T-cell (primary cell): ENCODE measurements at regions of chr6 and their contacts with region 1.

Region 1: GRCh38 chr6:27146706-27147505 is 100.6 kb upstream of the PRSS16 start:
- DNase-seq: peak; percentile 43 to 96 (median 69)
- ATAC-seq: peak; percentile 85 to 88 (median 86)
- H3K4me3 ChIP-seq: peak overlapping the region; percentile 77 to 93
- H3K4me3 Mint-ChIP-seq: no peak overlapping the region
- H3K27ac ChIP-seq: peak overlapping the region; percentile 91
- H3K27ac Mint-ChIP-seq: no peak overlapping the region
- H3K4me1 ChIP-seq: peaks cover 11 to 29% of the 10 kb centered on the region in 2 experiments
- H3K4me1 Mint-ChIP-seq: peaks cover 13 to 20% (median 18%) of the 10 kb centered on the region in 3 donors
- H3K27me3 ChIP-seq: no peaks in the 10 kb centered on the region
- H3K27me3 Mint-ChIP-seq: no peaks in the 10 kb centered on the region

Region 2: DNA sequence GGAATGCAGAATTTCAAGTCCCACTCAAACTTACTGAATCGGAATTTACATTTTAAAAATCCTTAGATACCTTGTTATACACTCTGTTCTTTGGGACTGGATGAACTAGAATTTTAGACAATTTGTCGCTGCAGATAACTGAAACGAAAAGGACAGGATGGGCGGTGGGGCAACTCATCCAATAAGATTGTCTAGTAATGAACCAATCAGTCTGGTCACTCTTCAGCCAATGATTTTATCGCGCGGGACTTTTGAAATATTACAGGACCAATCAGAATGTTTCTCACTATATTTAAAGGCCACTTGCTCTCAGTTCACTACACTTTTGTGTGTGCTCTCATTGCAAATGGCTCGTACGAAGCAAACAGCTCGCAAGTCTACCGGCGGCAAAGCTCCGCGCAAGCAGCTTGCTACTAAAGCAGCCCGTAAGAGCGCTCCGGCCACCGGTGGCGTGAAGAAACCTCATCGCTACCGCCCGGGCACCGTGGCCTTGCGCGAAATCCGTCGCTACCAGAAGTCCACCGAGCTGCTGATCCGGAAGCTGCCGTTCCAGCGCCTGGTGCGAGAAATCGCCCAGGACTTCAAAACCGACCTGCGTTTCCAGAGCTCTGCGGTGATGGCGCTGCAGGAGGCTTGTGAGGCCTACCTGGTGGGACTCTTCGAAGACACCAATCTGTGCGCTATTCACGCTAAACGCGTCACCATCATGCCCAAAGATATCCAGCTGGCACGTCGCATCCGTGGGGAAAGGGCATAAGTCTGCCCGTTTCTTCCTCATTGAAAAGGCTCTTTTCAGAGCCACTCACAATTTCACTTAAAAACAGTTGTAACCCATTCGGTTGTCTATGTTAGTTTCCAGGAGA is 1101.6 kb before region 1 on chr6:
- CTCF ChIA-PET with region 1: no interaction called
- POLR2A ChIA-PET with region 1: interaction called in 1 of 2 experiments, 22 read pairs
- DNase-seq: peak; percentile 45 to 90 (median 78)
- ATAC-seq: peak; percentile 63 to 66 (median 64)
- H3K4me3 ChIP-seq: peak overlapping the region; percentile 77 to 83
- H3K4me3 Mint-ChIP-seq: peak overlapping the region; percentile 84 to 91 (median 90)
- H3K27ac ChIP-seq: peak overlapping the region; percentile 90
- H3K27ac Mint-ChIP-seq: peak overlapping the region; percentile 98
- H3K4me1 ChIP-seq: peaks cover 5 to 26% of the 10 kb centered on the region in 2 experiments
- H3K4me1 Mint-ChIP-seq: peaks cover 15 to 27% (median 26%) of the 10 kb centered on the region in 3 donors
- H3K27me3 ChIP-seq: no peaks in the 10 kb centered on the region
- H3K27me3 Mint-ChIP-seq: no peaks in the 10 kb centered on the region

Region 3: DNA sequence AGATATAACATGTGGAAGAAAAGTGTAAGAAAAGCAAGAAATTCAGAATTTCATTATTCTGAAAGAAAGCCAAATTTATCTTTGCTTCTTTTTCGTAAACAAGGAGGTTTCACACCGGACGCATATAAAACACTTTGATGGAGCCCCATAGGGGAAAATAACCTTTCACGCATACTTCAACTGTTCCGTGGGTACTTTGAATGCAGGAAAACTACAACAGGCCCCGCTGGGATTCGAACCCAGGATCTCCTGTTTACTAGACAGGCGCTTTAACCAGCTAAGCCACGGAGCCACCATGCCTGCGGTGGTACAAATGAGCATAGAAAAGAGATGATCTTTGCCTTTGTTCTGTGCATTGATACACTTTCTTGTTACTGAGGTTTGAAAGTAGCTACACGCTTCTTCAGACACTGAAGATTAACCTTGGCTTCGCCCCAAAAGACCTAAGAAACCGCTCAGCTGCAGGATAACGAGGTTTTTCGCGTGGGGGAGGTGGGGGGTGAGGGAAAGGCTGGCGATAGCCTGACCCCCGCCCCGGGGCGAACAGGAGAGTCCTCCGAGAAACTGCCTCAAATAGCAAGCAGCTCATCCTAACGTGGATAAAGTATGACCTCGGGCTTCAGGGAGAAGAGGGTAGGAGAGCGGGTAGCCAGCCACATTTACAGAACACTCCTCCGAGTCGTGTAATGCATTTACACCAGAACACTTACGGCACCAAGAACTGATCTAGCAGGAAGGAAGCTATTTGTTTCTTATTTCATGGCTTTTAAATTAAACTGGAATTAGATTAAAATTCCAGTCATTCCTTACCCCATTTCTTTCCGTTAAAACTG is 614.0 kb before region 1 on chr6:
- CTCF ChIA-PET with region 1: interaction called in 1 of 2 experiments, 6 read pairs
- POLR2A ChIA-PET with region 1: interaction called in 1 of 2 experiments, 14 read pairs
- DNase-seq: peak; percentile 70 to 95 (median 86)
- ATAC-seq: peak; percentile 38 to 48 (median 43)
- H3K4me3 ChIP-seq: peak overlapping the region; percentile 66 to 86
- H3K4me3 Mint-ChIP-seq: peak overlapping the region; percentile 92 to 97 (median 95)
- H3K27ac ChIP-seq: peak overlapping the region; percentile 60
- H3K27ac Mint-ChIP-seq: peak overlapping the region; percentile 97 to 98
- H3K4me1 ChIP-seq: peaks cover 20 to 32% of the 10 kb centered on the region in 2 experiments
- H3K4me1 Mint-ChIP-seq: peaks cover 53 to 66% (median 60%) of the 10 kb centered on the region in 3 donors
- H3K27me3 ChIP-seq: no peaks in the 10 kb centered on the region
- H3K27me3 Mint-ChIP-seq: peaks cover 0 to 5% of the 10 kb centered on the region in 2 donors

Region 4: GRCh38 chr6:27132532-27133280 is 14.2 kb before region 1 on chr6:
- CTCF ChIA-PET with region 1: interaction called, 3 to 52 read pairs
- POLR2A ChIA-PET with region 1: interaction called, 88 to 201 read pairs
- DNase-seq: peak; percentile 76 to 98 (median 87)
- ATAC-seq: peak; percentile 80 to 87 (median 86)
- H3K4me3 ChIP-seq: peak overlapping the region; percentile 49 to 77
- H3K4me3 Mint-ChIP-seq: no peak overlapping the region
- H3K27ac ChIP-seq: peak overlapping the region; percentile 85
- H3K27ac Mint-ChIP-seq: no peak overlapping the region
- H3K4me1 ChIP-seq: peaks cover 17 to 34% of the 10 kb centered on the region in 2 experiments
- H3K4me1 Mint-ChIP-seq: peaks cover 22 to 30% (median 22%) of the 10 kb centered on the region in 3 donors
- H3K27me3 ChIP-seq: no peaks in the 10 kb centered on the region
- H3K27me3 Mint-ChIP-seq: no peaks in the 10 kb centered on the region

Region 5: GRCh38 chr6:27280064-27280539 is 133.2 kb after region 1 on chr6:
- CTCF ChIA-PET with region 1: no interaction called
- POLR2A ChIA-PET with region 1: no interaction called
- DNase-seq: peak in 1 of 35 experiments; percentile 30
- ATAC-seq: no peak
- H3K4me3 ChIP-seq: no peak overlapping the region
- H3K4me3 Mint-ChIP-seq: no peak overlapping the region
- H3K27ac ChIP-seq: no peak overlapping the region
- H3K27ac Mint-ChIP-seq: peak overlapping the region in 1 of 2 donors; percentile 71
- H3K4me1 ChIP-seq: peaks cover 0 to 9% of the 10 kb centered on the region in 2 experiments
- H3K4me1 Mint-ChIP-seq: peaks cover 0 to 7% (median 5%) of the 10 kb centered on the region in 3 donors
- H3K27me3 ChIP-seq: peaks cover 50 to 68% of the 10 kb centered on the region in 2 experiments
- H3K27me3 Mint-ChIP-seq: peaks cover 76 to 87% of the 10 kb centered on the region in 2 donors

Region 6: GRCh38 chr6:27503436-27504030 is 356.6 kb after region 1 on chr6:
- CTCF ChIA-PET with region 1: no interaction called
- POLR2A ChIA-PET with region 1: interaction called in 1 of 2 experiments, 12 read pairs
- DNase-seq: peak; percentile 55 to 86 (median 74)
- ATAC-seq: peak; percentile 58 to 66 (median 65)
- H3K4me3 ChIP-seq: peak overlapping the region; percentile 62 to 84
- H3K4me3 Mint-ChIP-seq: peak overlapping the region; percentile 79 to 86 (median 83)
- H3K27ac ChIP-seq: peak overlapping the region; percentile 64
- H3K27ac Mint-ChIP-seq: peak overlapping the region; percentile 80 to 81
- H3K4me1 ChIP-seq: peaks cover 10 to 15% of the 10 kb centered on the region in 2 experiments
- H3K4me1 Mint-ChIP-seq: peaks cover 37 to 42% (median 39%) of the 10 kb centered on the region in 3 donors
- H3K27me3 ChIP-seq: peaks cover 7 to 8% of the 10 kb centered on the region in 2 experiments
- H3K27me3 Mint-ChIP-seq: peaks cover 0 to 10% of the 10 kb centered on the region in 2 donors

Region 7: DNA sequence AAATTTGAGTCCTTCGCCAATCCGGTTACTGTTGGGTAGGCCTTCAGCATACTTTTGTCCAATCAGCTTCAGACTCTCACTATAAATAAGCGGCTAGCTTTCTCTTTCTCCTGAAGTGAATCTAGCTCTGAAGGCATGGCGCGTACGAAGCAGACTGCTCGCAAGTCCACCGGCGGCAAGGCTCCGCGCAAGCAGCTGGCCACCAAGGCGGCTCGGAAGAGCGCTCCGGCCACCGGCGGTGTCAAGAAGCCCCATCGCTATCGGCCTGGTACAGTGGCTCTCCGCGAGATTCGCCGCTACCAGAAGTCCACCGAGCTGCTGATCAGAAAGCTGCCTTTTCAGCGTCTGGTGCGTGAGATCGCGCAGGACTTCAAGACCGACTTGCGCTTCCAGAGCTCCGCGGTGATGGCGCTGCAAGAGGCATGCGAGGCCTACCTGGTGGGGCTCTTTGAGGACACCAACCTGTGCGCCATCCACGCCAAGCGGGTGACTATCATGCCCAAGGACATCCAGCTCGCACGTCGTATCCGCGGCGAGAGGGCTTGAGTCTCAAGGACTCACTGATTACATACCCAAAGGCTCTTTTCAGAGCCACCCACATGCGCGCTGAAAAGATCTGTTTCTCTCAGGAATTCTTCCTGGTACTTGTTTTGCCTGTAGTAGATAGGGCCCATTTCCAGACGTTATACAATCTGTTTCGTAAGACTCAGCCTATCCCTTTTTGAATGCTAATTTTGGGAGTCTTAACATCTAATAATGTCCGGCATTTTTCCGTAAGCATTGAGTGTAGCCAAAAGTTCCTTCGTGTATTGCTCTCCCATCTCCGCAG is 663.2 kb after region 1 on chr6:
- CTCF ChIA-PET with region 1: interaction called in 1 of 2 experiments, 4 read pairs
- POLR2A ChIA-PET with region 1: interaction called, 4 to 41 read pairs
- DNase-seq: peak; percentile 60 to 94 (median 73)
- ATAC-seq: peak; percentile 61 to 66 (median 62)
- H3K4me3 ChIP-seq: peak overlapping the region; percentile 62 to 68
- H3K4me3 Mint-ChIP-seq: peak overlapping the region; percentile 87 to 94 (median 90)
- H3K27ac ChIP-seq: peak overlapping the region; percentile 81
- H3K27ac Mint-ChIP-seq: peak overlapping the region; percentile 95 to 98
- H3K4me1 ChIP-seq: peaks cover 38% of the 10 kb centered on the region in 2 experiments
- H3K4me1 Mint-ChIP-seq: peaks cover 48 to 61% (median 52%) of the 10 kb centered on the region in 3 donors
- H3K27me3 ChIP-seq: no peaks in the 10 kb centered on the region
- H3K27me3 Mint-ChIP-seq: no peaks in the 10 kb centered on the region

Region 8: GRCh38 chr6:27864906-27865849 is 718.3 kb after region 1 on chr6:
- CTCF ChIA-PET with region 1: interaction called in 1 of 2 experiments, 5 read pairs
- POLR2A ChIA-PET with region 1: interaction called in 1 of 2 experiments, 30 read pairs
- DNase-seq: peak; percentile 30 to 95 (median 62)
- ATAC-seq: peak; percentile 78 to 85 (median 80)
- H3K4me3 ChIP-seq: peak overlapping the region; percentile 76 to 96
- H3K4me3 Mint-ChIP-seq: peak overlapping the region; percentile 98 to 99 (median 98)
- H3K27ac ChIP-seq: peak overlapping the region; percentile 78
- H3K27ac Mint-ChIP-seq: peak overlapping the region; percentile 89 to 96
- H3K4me1 ChIP-seq: peaks cover 14 to 38% of the 10 kb centered on the region in 2 experiments
- H3K4me1 Mint-ChIP-seq: peaks cover 43 to 48% (median 45%) of the 10 kb centered on the region in 3 donors
- H3K27me3 ChIP-seq: no peaks in the 10 kb centered on the region
- H3K27me3 Mint-ChIP-seq: no peaks in the 10 kb centered on the region